Aorta (tissue), 5 donors: ENCODE measurements at regions of chr17 and their contacts with region 1.

Region 1: GRCh38 chr17:76467366-76467765 is at the start of gene AANAT:
- DNase-seq: no peak
- ATAC-seq: no peak
- H3K4me3 ChIP-seq: no peak within 1 kb of the TSS
- H3K27ac ChIP-seq: no peak within 1 kb of the TSS
- H3K4me1 ChIP-seq: no peaks in the 10 kb centered on the region
- H3K27me3 ChIP-seq: no peaks in the 10 kb centered on the region
- total RNA-seq, gene AANAT: not detected

Region 2: GRCh38 chr17:76414334-76415295 is 52.8 kb before region 1 on chr17:
- intact Hi-C with region 1: loop called in 1 of 2 experiments (anchors 10 kb)
- DNase-seq: peak; percentile 80 to 88
- ATAC-seq: peak; percentile 79
- H3K4me3 ChIP-seq: no peak overlapping the region
- H3K27ac ChIP-seq: no peak overlapping the region
- H3K4me1 ChIP-seq: no peaks in the 10 kb centered on the region
- H3K27me3 ChIP-seq: no peaks in the 10 kb centered on the region

Region 3: DNA sequence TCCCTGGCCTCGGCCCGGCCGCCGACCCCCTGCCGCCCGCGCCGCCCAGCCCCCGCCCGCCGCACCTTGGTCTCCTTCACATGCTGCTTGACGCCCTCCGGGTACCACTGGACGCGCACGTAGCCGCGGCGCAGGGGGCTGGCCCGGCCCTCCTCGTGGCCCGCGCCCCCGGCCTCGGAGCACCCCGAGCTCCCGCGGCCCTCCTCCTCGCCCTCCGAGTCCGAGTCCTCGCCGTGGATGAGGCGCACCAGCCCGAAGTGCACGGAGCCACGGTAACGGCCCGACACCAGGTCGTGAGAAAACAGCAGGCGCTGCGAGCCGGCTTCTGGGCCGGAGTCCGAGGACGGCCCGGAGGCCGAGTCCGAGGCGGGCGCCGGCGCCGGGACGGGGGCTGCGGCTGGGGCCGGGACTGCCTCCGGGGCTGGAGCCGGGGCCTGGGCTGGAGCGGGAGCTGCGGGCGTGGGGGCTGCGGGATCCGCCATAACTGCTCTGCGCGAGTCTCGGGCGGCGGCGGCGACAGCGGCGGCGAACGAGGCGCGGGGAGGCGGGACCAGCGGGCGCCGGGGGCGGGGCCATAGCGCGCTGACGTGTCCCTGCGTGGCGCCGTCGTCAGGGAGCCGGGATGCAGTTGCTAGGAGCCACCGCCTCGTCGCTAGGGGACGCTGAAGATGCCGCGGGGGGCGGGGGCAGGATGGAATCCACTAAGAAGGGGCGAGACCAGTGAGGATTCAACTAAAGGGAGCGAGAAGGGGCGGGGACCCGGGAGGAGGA is 14.5 kb before region 1 on chr17 and contains the start of gene UBE2O:
- intact Hi-C with region 1: no loop called
- DNase-seq: peak; percentile 92 to 97
- ATAC-seq: peak; percentile 92
- H3K4me3 ChIP-seq: peak within 1 kb of the TSS; percentile 59 to 79
- H3K27ac ChIP-seq: no peak within 1 kb of the TSS
- H3K4me1 ChIP-seq: no peaks in the 10 kb centered on the region
- H3K27me3 ChIP-seq: no peaks in the 10 kb centered on the region
- total RNA-seq, gene UBE2O: 14.0 to 24.7 TPM

Region 4: DNA sequence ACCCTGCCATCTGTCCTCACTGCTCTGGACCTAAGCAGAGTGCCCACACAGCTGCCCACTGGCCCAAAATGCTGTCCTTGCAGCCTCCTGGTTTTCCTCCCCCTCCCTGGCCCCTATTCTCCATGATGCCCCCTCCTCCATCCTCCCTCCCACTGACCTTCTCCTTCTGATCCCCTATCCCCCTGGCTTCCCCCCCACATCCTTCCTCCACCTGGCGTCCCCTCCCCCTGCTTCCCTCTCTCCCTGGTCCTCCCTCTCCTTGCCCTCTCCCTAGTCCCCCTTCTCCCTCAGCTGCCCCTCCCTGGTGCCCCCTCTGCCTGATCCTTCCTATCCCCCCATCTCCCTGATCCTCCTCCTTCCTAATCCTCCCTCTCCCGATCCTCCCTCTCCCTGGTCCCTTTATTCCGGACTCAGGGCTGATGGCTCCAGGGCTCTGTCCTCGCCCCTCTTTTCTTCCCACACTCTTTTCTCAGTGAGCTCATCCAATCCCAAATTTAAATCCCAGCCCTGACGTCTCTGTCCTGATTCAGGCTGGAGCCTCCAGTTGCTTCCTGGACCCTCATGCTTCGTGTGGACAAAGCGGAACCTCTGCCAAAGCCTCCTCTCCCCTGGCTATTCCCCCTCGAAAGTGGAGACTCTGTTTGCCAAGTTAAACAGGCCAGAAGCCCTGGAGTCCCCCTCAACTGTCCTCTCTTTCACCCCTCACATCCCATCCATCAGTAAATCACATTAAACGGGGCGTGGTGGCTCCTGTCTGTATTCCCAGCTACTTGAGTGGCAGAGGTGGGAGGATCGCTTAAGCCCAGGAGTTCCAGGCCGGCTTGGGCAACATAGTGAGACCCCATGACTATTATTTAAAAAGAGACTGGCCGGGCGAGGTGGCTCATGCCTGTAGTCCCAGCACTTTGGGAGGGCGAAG is 51.9 kb after region 1 on chr17:
- intact Hi-C with region 1: no loop called
- DNase-seq: no peak
- ATAC-seq: no peak
- H3K4me3 ChIP-seq: no peak overlapping the region
- H3K27ac ChIP-seq: no peak overlapping the region
- H3K4me1 ChIP-seq: no peaks in the 10 kb centered on the region
- H3K27me3 ChIP-seq: no peaks in the 10 kb centered on the region

Region 5: GRCh38 chr17:76529224-76530094 is 62.1 kb after region 1 on chr17:
- intact Hi-C with region 1: no loop called
- DNase-seq: peak; percentile 90 to 92
- ATAC-seq: peak; percentile 84
- H3K4me3 ChIP-seq: no peak overlapping the region
- H3K27ac ChIP-seq: peak overlapping the region in 1 of 2 donors; percentile 29
- H3K4me1 ChIP-seq: no peaks in the 10 kb centered on the region
- H3K27me3 ChIP-seq: no peaks in the 10 kb centered on the region